ENCODE measurements at regions of chr12 and their contacts with region 1.

Region 1: DNA sequence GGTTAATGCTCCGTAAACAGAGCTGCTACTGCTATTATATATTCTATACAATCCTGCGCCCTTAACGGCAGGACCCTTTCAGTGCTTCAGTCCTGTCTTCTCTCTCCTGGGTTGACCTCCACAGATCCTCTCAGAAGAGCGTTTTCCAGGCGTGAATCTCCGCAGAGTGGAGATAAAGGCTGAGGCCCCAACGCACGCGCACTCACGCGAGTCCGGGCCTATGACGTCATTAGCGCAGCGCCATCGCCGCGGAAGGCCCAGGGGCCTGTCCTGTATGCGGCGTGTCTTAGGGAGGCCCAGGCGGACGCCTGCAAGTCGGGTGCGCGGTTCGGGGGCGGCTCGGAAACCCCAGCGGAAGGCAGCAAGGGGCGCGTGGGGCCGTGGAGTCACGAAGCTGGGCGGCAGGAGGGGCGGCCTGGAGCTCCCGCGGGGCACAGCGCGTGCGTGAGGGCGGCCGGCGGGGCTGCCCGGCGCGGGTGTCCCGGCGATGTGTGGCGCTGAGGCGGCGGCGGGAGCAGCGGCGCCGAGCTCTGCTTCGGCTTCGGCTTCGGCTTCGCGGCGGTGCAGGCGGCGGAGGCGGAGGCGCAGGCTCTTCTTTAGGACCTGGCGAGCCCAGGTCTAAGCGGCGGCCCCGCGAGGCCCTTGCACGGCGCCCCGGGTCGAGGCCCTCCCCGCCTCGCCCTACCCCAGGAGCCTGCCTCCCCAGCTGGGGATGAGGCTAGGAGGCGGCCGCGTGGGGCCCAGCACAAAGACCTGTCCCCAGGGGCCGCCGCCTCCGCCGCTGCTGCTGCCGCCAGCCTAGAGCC is at the start of gene MAPKAPK5:
- DNase-seq: peak; percentile 96 to 99 (median 97)
- H3K4me3 ChIP-seq: peak within 1 kb of the TSS; percentile 95 to 97
- H3K4me3 Mint-ChIP-seq: peak within 1 kb of the TSS; percentile 96 to 99 (median 99)
- H3K27ac ChIP-seq: peak within 1 kb of the TSS; percentile 84
- H3K27ac Mint-ChIP-seq: peak within 1 kb of the TSS; percentile 98 to 100 (median 100)
- H3K4me1 ChIP-seq: peaks cover 46% of the 10 kb centered on the region
- H3K4me1 Mint-ChIP-seq: peaks cover 42 to 80% (median 58%) of the 10 kb centered on the region in 4 donors
- H3K27me3 ChIP-seq: no peaks in the 10 kb centered on the region
- H3K27me3 Mint-ChIP-seq: peaks cover 0 to 1% of the 10 kb centered on the region in 2 donors
- total RNA-seq, gene MAPKAPK5: 59.6 to 68.1 TPM

Region 2: DNA sequence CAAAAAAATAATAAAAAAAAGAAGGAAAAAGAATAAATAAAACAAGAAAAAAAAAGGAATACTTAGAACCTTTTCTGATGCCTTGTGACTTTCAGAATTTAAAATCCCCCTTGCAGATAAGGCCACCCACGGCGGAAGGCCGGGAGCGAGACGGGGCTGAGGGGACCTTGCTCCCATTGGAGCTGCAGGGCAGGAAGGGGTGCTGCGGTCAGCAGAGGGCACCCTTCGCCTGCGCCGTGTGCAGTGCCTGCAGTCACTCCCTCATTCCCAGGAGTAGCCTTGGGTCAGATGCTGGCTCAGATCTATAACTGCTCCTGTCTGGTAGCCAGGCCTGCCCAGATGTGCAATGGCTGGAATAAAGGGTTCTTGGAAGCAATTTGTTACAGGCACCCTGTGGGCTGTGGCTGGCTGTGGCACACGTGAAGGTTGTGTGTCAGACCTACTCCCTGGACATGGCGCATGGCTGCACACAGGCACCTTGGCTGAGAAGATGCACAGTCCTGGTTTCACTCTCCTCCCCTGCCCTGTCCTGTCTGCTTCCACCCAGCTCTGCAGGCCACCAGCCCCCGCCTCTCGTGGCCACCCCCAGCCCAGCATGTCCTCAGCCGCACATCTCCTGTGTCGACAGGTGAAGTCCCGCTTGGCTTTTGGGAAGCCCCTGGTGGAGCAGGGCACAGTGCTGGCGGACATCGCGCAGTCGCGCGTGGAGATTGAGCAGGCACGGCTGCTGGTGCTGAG is 88.6 kb before region 1 on chr12:
- CTCF ChIA-PET with region 1: no interaction called
- POLR2A ChIA-PET with region 1: no interaction called
- intact Hi-C with region 1: no loop called
- DNase-seq: no peak
- H3K4me3 ChIP-seq: no peak overlapping the region
- H3K4me3 Mint-ChIP-seq: no peak overlapping the region
- H3K27ac ChIP-seq: no peak overlapping the region
- H3K27ac Mint-ChIP-seq: no peak overlapping the region
- H3K4me1 ChIP-seq: no peaks in the 10 kb centered on the region
- H3K4me1 Mint-ChIP-seq: peaks cover 0 to 4% (median 0%) of the 10 kb centered on the region in 4 donors
- H3K27me3 ChIP-seq: no peaks in the 10 kb centered on the region
- H3K27me3 Mint-ChIP-seq: no peaks in the 10 kb centered on the region

Region 3: GRCh38 chr12:111812881-111813741 is 28.8 kb before region 1 on chr12:
- CTCF ChIA-PET with region 1: interaction called, 9 read pairs
- POLR2A ChIA-PET with region 1: interaction called, 11 read pairs
- intact Hi-C with region 1: no loop called
- DNase-seq: peak; percentile 57 to 65 (median 62)
- H3K4me3 ChIP-seq: no peak overlapping the region
- H3K4me3 Mint-ChIP-seq: peak overlapping the region in 4 of 8 donors; percentile 15 to 39 (median 24)
- H3K27ac ChIP-seq: no peak overlapping the region
- H3K27ac Mint-ChIP-seq: peak overlapping the region in 1 of 7 donors; percentile 1
- H3K4me1 ChIP-seq: peaks cover 10% of the 10 kb centered on the region
- H3K4me1 Mint-ChIP-seq: peaks cover 6 to 10% (median 8%) of the 10 kb centered on the region in 4 donors
- H3K27me3 ChIP-seq: no peaks in the 10 kb centered on the region
- H3K27me3 Mint-ChIP-seq: peaks cover 0 to 7% of the 10 kb centered on the region in 2 donors

Region 4: DNA sequence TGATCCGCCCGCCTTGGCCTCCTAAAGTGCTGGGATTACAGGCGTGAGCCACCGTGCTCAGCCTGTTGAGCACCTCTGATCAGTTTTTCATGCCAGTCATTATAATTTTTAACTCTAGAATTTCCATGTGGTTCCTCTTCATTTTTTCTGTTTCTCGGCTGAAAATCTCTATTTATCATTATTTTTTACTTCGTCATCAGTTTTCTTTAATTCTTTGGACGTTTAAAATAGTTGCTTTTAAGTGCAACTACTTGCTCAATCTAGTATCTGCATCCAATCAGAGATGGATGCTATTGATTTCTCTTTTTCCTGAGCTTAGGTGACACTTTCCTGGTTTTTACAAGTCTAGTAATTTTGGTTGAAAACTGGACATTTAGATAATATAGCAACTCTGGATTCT is 16.8 kb after region 1 on chr12:
- CTCF ChIA-PET with region 1: no interaction called
- POLR2A ChIA-PET with region 1: interaction called, 14 read pairs
- intact Hi-C with region 1: no loop called
- DNase-seq: no peak
- H3K4me3 ChIP-seq: no peak overlapping the region
- H3K4me3 Mint-ChIP-seq: no peak overlapping the region
- H3K27ac ChIP-seq: no peak overlapping the region
- H3K27ac Mint-ChIP-seq: no peak overlapping the region
- H3K4me1 ChIP-seq: peaks cover 8% of the 10 kb centered on the region
- H3K4me1 Mint-ChIP-seq: peaks cover 16 to 45% (median 32%) of the 10 kb centered on the region in 4 donors
- H3K27me3 ChIP-seq: no peaks in the 10 kb centered on the region
- H3K27me3 Mint-ChIP-seq: no peaks in the 10 kb centered on the region

Region 5: GRCh38 chr12:112125250-112125999 is 283.5 kb after region 1 on chr12 and contains the start of gene TRAFD1:
- CTCF ChIA-PET with region 1: no interaction called
- POLR2A ChIA-PET with region 1: interaction called, 8 read pairs
- intact Hi-C with region 1: loop called (anchors 5 kb)
- DNase-seq: peak; percentile 97 to 99 (median 98)
- H3K4me3 ChIP-seq: peak within 1 kb of the TSS; percentile 63 to 99
- H3K4me3 Mint-ChIP-seq: peak within 1 kb of the TSS; percentile 78 to 93 (median 88)
- H3K27ac ChIP-seq: peak within 1 kb of the TSS; percentile 86
- H3K27ac Mint-ChIP-seq: peak within 1 kb of the TSS; percentile 83 to 95 (median 91)
- H3K4me1 ChIP-seq: peaks cover 52% of the 10 kb centered on the region
- H3K4me1 Mint-ChIP-seq: peaks cover 15 to 50% (median 33%) of the 10 kb centered on the region in 4 donors
- H3K27me3 ChIP-seq: no peaks in the 10 kb centered on the region
- H3K27me3 Mint-ChIP-seq: no peaks in the 10 kb centered on the region
- total RNA-seq, gene TRAFD1: 38.7 to 42.7 TPM

Region 6: GRCh38 chr12:112314981-112315380 is 473.0 kb after region 1 on chr12:
- CTCF ChIA-PET with region 1: no interaction called
- POLR2A ChIA-PET with region 1: no interaction called
- intact Hi-C with region 1: no loop called
- DNase-seq: no peak
- H3K4me3 ChIP-seq: no peak overlapping the region
- H3K4me3 Mint-ChIP-seq: no peak overlapping the region
- H3K27ac ChIP-seq: no peak overlapping the region
- H3K27ac Mint-ChIP-seq: peak overlapping the region in 1 of 7 donors; percentile 7
- H3K4me1 ChIP-seq: no peaks in the 10 kb centered on the region
- H3K4me1 Mint-ChIP-seq: no peaks in the 10 kb centered on the region
- H3K27me3 ChIP-seq: no peaks in the 10 kb centered on the region
- H3K27me3 Mint-ChIP-seq: no peaks in the 10 kb centered on the region